B cell (primary cell): ENCODE measurements at regions of chr1 and their contacts with region 1.

Region 1: DNA sequence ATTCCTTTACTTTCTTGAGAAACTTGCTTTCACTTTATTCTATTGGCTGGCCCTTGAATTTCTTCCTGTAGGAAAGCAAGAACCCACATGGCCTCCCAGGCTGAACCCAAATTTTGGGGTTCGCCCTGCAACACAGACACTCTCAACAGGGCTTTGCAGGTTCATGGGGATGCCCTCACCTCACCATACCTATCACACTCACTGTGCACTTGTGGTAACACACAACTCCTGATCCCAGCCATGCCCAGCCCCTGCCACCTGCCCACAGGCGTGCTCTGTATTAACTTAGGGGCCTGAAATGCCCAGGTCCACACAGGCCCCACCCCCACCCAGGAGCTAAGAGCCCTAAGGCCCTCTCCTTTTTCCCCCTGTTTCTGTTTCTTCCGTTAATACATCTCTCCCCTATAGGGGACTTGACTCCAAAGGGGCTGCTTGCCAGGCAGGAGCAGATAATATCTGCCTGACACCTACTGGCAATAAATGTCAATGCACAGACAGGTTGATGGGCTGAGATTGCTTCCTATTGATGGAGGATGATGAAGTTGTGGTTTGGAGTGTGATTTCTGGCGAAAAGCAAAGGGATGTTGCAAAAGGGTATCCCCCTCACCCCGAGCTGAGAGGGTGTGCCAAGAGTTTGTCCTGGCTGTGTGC is 171.5 kb downstream of the AJAP1 start:
- DNase-seq: peak; percentile 52
- ATAC-seq: no peak
- H3K4me3 ChIP-seq: no peak overlapping the region
- H3K4me3 Mint-ChIP-seq: no peak overlapping the region
- H3K27ac ChIP-seq: no peak overlapping the region
- H3K27ac Mint-ChIP-seq: no peak overlapping the region
- H3K4me1 ChIP-seq: no peaks in the 10 kb centered on the region
- H3K4me1 Mint-ChIP-seq: no peaks in the 10 kb centered on the region
- H3K27me3 ChIP-seq: peaks cover 0 to 4% (median 0%) of the 10 kb centered on the region in 4 experiments
- H3K27me3 Mint-ChIP-seq: peaks cover 5% of the 10 kb centered on the region
- CTCF ChIP-seq: peak; percentile 46

Region 2: GRCh38 chr1:4483021-4483625 is 342.8 kb before region 1 on chr1:
- CTCF ChIA-PET with region 1: no interaction called
- POLR2A ChIA-PET with region 1: no interaction called
- intact Hi-C with region 1: no loop called
- DNase-seq: no peak
- ATAC-seq: no peak
- H3K4me3 ChIP-seq: no peak overlapping the region
- H3K4me3 Mint-ChIP-seq: no peak overlapping the region
- H3K27ac ChIP-seq: no peak overlapping the region
- H3K27ac Mint-ChIP-seq: no peak overlapping the region
- H3K4me1 ChIP-seq: no peaks in the 10 kb centered on the region
- H3K4me1 Mint-ChIP-seq: no peaks in the 10 kb centered on the region
- H3K27me3 ChIP-seq: no peaks in the 10 kb centered on the region
- H3K27me3 Mint-ChIP-seq: peaks cover 3% of the 10 kb centered on the region
- CTCF ChIP-seq: no peak

Region 3: DNA sequence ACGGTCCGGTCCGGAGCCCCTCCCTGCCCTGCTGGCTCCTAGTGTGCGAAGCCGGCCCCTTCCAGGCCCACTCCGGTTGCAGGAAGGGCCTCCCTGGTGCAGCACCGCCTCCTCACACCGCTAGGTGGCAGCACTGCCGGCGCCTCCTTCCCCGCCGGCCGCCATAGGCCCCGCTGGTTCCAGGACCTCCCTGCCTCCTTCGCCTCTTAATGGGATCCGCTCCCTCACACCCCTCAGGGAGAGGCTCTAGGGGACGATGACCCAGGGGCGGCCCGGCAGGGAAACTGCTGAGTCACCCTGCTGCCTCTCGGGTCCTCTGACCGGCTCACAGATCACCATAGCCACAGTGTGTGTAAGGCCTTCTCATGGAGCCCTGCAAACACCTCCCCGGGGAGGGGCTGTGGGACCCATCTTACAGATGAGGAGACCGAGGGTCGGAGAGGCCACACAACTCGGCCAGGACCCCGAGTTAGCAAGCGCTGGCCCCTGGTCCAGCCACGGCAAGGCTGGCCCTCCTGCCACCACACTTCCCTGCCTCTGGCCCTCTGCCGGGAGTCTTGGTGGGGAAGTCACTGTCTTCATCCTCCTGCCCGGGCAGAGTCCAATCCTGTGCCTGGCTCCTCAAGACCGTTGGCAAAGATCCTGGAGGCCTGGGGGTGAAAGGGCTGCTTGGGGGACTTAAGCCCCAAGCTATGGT is 173.1 kb before region 1 on chr1:
- CTCF ChIA-PET with region 1: interaction called, 3 read pairs
- POLR2A ChIA-PET with region 1: no interaction called
- intact Hi-C with region 1: loop called (anchors 10 kb)
- DNase-seq: peak; percentile 65
- ATAC-seq: peak; percentile 71
- H3K4me3 ChIP-seq: no peak overlapping the region
- H3K4me3 Mint-ChIP-seq: no peak overlapping the region
- H3K27ac ChIP-seq: no peak overlapping the region
- H3K27ac Mint-ChIP-seq: no peak overlapping the region
- H3K4me1 ChIP-seq: peaks cover 7 to 8% of the 10 kb centered on the region in 2 donors
- H3K4me1 Mint-ChIP-seq: peaks cover 3% of the 10 kb centered on the region
- H3K27me3 ChIP-seq: peaks cover 0 to 54% (median 16%) of the 10 kb centered on the region in 4 experiments
- H3K27me3 Mint-ChIP-seq: peaks cover 16% of the 10 kb centered on the region
- CTCF ChIP-seq: peak; percentile 99

Region 4: GRCh38 chr1:4786055-4786454 is 39.9 kb before region 1 on chr1:
- CTCF ChIA-PET with region 1: no interaction called
- POLR2A ChIA-PET with region 1: no interaction called
- intact Hi-C with region 1: no loop called
- DNase-seq: no peak
- ATAC-seq: no peak
- H3K4me3 ChIP-seq: no peak overlapping the region
- H3K4me3 Mint-ChIP-seq: no peak overlapping the region
- H3K27ac ChIP-seq: no peak overlapping the region
- H3K27ac Mint-ChIP-seq: no peak overlapping the region
- H3K4me1 ChIP-seq: no peaks in the 10 kb centered on the region
- H3K4me1 Mint-ChIP-seq: no peaks in the 10 kb centered on the region
- H3K27me3 ChIP-seq: no peaks in the 10 kb centered on the region
- H3K27me3 Mint-ChIP-seq: peaks cover 4% of the 10 kb centered on the region
- CTCF ChIP-seq: no peak